Activated CD4-positive, alpha-beta T cell treated with anti-CD3 and anti-CD28 coated beads, Interleukin-2, amount 10 ng/mL, durations not matched to agents 24 days and 14 days (primary cell): ENCODE measurements at regions of chr18 and their contacts with region 1.

Region 1: GRCh38 chr18:46660955-46661749 is 4.1 kb upstream of the LOXHD1 start:
- DNase-seq: no peak
- H3K4me3 Mint-ChIP-seq: no peak overlapping the region
- H3K27ac Mint-ChIP-seq: no peak overlapping the region
- H3K4me1 Mint-ChIP-seq: no peaks in the 10 kb centered on the region
- H3K27me3 Mint-ChIP-seq: peaks cover 8% of the 10 kb centered on the region

Region 2: GRCh38 chr18:46148810-46149209 is 512.3 kb before region 1 on chr18:
- intact Hi-C with region 1: loop called (anchors 1 kb)
- DNase-seq: peak; percentile 88
- H3K4me3 Mint-ChIP-seq: no peak overlapping the region
- H3K27ac Mint-ChIP-seq: peak overlapping the region; percentile 7
- H3K4me1 Mint-ChIP-seq: peaks cover 26% of the 10 kb centered on the region
- H3K27me3 Mint-ChIP-seq: no peaks in the 10 kb centered on the region

Region 3: DNA sequence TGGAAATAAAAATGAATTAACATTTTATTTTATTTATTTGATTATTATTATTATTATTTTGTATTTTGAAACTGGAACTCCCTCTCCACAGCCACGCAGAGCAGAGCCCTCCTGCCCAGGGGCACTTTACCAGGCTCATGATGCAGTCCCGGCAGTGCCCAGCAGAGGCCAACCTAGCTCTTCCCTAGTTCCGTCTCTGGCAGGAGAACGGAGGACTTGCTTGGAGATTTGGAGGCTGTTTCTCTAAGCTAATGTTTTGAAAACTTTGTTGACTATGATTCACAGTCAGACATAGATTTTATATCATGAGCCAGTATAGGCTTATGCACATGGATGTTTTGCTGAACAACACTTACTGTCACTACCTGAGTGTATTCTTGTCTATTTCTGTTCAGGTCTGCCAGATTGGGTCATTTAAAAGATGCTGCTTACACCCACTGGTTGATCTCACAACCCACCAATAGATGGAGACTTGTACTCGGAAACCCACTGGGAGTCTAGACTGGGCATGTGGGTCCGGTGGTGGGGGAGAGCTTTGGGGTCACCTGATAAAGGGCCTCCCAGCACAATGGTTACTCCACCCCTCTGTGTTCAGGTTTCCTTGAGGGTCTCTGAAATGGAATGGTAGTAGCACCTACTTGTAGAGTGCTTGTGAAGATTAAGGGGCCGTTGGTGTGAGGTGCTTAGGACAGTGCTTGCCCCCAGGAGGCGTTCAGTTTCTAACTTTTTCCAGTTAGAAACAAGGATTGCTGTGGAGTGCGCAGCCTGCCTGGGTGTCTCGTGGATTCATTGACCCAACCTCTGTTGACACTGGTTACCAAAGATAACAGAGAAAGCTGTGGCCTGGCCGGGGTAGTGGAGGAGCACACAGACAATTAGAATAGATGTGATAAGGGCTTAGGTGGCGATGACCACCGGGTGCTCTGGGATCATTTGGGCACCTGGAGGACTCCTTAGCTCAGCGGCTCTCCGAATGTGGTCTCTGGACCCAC is 379.7 kb before region 1 on chr18:
- intact Hi-C with region 1: loop called (anchors 1 kb)
- DNase-seq: peak; percentile 89
- H3K4me3 Mint-ChIP-seq: no peak overlapping the region
- H3K27ac Mint-ChIP-seq: no peak overlapping the region
- H3K4me1 Mint-ChIP-seq: peaks cover 6% of the 10 kb centered on the region
- H3K27me3 Mint-ChIP-seq: no peaks in the 10 kb centered on the region

Region 4: GRCh38 chr18:46555724-46556123 is 105.4 kb before region 1 on chr18:
- intact Hi-C with region 1: loop called (anchors 10 kb)
- DNase-seq: peak; percentile 61
- H3K4me3 Mint-ChIP-seq: no peak overlapping the region
- H3K27ac Mint-ChIP-seq: no peak overlapping the region
- H3K4me1 Mint-ChIP-seq: no peaks in the 10 kb centered on the region
- H3K27me3 Mint-ChIP-seq: peaks cover 2% of the 10 kb centered on the region

Region 5: GRCh38 chr18:46756559-46757201 is 95.5 kb after region 1 on chr18 and contains the start of gene ST8SIA5:
- intact Hi-C with region 1: no loop called
- DNase-seq: no peak
- H3K4me3 Mint-ChIP-seq: peak within 1 kb of the TSS; percentile 73
- H3K27ac Mint-ChIP-seq: no peak within 1 kb of the TSS
- H3K4me1 Mint-ChIP-seq: peaks cover 9% of the 10 kb centered on the region
- H3K27me3 Mint-ChIP-seq: peaks cover 66% of the 10 kb centered on the region
- total RNA-seq, gene ST8SIA5: not detected in 2 replicates